ENCODE measurements at regions of chr18 and their contacts with region 1.

Region 1: GRCh38 chr18:48949606-48950470 is 927 bp downstream of the SMAD7 start:
- DNase-seq: peak in 1 of 4 donors; percentile 86
- ATAC-seq: peak; percentile 1
- H3K4me3 ChIP-seq: peak overlapping the region; percentile 85 to 89
- H3K27ac ChIP-seq: peak overlapping the region; percentile 97 to 99
- H3K4me1 ChIP-seq: peaks cover 32 to 50% of the 10 kb centered on the region in 2 donors
- H3K27me3 ChIP-seq: no peaks in the 10 kb centered on the region
- CTCF ChIP-seq: peak in 1 of 2 donors; percentile 9

Region 2: DNA sequence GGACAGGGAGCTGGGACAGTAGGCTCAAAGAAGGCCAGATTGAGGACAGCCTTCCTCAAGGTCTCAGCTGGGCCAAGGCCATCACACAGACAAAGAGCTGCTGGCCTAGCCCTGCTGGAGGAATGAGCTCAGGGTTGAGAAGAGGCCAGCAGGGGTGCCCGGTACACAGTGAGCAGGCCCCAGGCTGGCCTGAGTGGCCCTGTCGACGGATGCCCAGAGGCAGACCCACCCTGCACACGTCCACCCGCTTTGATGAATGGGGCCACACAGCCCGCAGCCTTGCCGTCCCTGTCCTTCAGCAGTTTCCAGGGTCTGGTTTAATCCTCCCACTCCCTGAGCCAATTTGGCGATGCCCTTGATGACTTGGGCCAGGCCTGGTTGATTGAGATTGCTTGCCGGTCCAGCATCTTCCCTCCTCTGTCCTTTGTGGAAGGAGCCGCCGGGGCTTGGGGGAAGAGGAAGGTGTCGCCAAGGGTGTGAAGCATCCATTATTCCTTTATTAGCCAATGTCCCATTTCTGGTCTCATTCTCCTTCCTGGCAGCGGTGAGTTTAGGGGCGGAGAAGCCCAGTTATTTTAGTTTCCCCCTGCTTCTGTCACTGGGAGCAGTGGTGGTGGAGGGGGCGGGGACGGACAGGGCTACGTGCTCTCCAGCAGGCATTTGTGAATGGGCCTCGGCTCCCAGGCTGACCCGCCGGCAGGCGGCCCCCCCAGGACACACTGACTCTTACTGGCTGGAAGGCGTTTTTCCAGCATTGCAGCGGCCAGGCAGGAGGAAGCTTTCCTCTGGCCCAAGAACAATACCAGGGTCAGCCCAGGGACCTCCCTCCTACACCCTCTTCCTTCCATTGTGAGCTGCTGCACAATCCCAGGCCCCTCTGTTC is 269.3 kb before region 1 on chr18:
- intact Hi-C with region 1: loop called in 1 of 2 experiments (anchors 10 kb)
- DNase-seq: peak in 2 of 4 donors; percentile 55 to 66
- ATAC-seq: peak; percentile 57
- H3K4me3 ChIP-seq: no peak overlapping the region
- H3K27ac ChIP-seq: peak overlapping the region; percentile 58 to 63
- H3K4me1 ChIP-seq: peaks cover 0 to 50% of the 10 kb centered on the region in 2 donors
- H3K27me3 ChIP-seq: no peaks in the 10 kb centered on the region
- CTCF ChIP-seq: no peak

Region 3: DNA sequence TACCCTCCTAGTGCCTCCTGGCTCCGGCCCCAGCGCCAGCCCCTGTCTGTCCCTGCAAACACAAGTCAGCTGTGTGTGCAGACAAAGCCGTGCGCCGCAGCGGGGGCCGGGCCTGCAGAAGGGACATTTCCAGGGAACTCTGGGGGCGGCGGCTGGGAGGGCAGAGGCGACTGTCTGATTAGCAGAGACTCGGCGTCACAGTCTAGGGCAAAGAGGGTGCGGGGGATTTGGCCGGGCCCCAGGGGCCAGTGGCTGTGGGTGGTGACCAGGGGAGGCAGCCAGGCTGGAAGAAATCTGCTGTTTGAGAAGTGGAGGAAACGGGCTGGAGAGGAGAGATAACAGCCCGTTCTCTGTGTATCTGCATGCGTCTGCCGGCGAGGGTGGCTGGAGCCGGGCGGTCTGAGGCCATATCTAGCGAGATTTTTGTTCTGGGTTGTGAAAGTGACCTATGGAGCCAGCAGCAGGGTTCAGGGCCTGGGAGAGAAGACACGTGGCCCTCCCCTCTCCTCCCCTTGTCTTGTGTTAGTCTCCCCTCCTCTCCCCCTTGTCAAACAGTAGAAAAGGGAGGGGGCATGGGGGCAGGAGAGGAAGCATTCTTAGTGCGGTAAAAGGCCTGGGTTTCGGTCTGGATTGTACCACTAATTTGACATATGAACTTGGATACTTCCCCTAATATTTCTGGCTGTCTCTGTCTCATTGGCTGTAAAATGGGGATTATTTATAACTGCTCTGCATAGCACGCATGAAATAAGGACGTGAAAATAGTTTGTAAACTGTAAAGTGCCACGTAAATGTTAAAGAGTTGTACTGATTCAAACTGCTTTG is 168.5 kb before region 1 on chr18:
- intact Hi-C with region 1: loop called in 1 of 2 experiments (anchors 10 kb)
- DNase-seq: peak; percentile 90 to 93 (median 90)
- ATAC-seq: peak; percentile 65
- H3K4me3 ChIP-seq: no peak overlapping the region
- H3K27ac ChIP-seq: peak overlapping the region; percentile 63 to 83
- H3K4me1 ChIP-seq: peaks cover 27 to 84% of the 10 kb centered on the region in 2 donors
- H3K27me3 ChIP-seq: no peaks in the 10 kb centered on the region
- CTCF ChIP-seq: no peak

Region 4: DNA sequence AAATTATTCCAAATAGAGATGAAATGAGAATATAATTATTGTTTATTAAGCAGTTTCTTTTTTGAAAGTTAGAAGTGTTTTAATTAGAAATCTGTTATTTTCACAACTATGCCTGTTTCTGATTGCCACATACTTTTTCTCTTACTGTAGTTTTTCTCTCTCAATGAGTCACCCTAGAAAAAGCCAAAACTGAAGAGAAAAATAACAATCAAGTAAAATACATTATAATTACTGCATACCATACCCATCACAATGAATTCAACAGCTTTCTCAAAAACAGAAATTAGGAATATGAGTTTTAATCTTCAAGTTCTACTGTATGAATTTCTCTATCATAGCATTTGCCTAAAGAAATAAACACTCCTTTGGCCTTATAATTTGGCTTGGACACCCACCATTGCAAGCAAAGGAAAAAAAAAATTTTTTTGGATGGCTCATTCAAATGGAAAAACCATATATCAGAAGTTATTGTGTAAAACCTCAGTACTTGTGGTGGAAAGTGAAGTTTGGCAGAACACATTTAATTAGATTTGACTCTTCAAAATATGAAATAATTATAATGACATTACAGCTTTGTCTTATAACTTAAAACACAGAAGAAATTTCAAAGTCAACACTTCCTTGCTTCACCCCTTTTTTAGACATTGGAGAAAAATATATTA is 372.1 kb after region 1 on chr18:
- intact Hi-C with region 1: no loop called
- DNase-seq: peak in 1 of 4 donors; percentile 17
- ATAC-seq: no peak
- H3K4me3 ChIP-seq: no peak overlapping the region
- H3K27ac ChIP-seq: peak overlapping the region in 1 of 2 donors; percentile 0
- H3K4me1 ChIP-seq: no peaks in the 10 kb centered on the region
- H3K27me3 ChIP-seq: no peaks in the 10 kb centered on the region
- CTCF ChIP-seq: no peak